Activated naive CD4-positive, alpha-beta T cell treated with anti-CD3 and anti-CD28 coated beads for 36 hours (primary cell): ENCODE measurements at regions of chr15 and their contacts with region 1.

Region 1: GRCh38 chr15:69058830-69059556 is 44.5 kb downstream of the NOX5 start:
- DNase-seq: peak; percentile 86
- H3K4me3 Mint-ChIP-seq: no peak overlapping the region
- H3K27ac Mint-ChIP-seq: no peak overlapping the region
- H3K4me1 Mint-ChIP-seq: peaks cover 22% of the 10 kb centered on the region
- H3K27me3 Mint-ChIP-seq: peaks cover 4% of the 10 kb centered on the region

Region 2: GRCh38 chr15:68763063-68763462 is 295.9 kb before region 1 on chr15:
- CTCF ChIA-PET with region 1: no interaction called
- intact Hi-C with region 1: no loop called
- DNase-seq: no peak
- H3K4me3 Mint-ChIP-seq: no peak overlapping the region
- H3K27ac Mint-ChIP-seq: no peak overlapping the region
- H3K4me1 Mint-ChIP-seq: no peaks in the 10 kb centered on the region
- H3K27me3 Mint-ChIP-seq: peaks cover 6% of the 10 kb centered on the region

Region 3: DNA sequence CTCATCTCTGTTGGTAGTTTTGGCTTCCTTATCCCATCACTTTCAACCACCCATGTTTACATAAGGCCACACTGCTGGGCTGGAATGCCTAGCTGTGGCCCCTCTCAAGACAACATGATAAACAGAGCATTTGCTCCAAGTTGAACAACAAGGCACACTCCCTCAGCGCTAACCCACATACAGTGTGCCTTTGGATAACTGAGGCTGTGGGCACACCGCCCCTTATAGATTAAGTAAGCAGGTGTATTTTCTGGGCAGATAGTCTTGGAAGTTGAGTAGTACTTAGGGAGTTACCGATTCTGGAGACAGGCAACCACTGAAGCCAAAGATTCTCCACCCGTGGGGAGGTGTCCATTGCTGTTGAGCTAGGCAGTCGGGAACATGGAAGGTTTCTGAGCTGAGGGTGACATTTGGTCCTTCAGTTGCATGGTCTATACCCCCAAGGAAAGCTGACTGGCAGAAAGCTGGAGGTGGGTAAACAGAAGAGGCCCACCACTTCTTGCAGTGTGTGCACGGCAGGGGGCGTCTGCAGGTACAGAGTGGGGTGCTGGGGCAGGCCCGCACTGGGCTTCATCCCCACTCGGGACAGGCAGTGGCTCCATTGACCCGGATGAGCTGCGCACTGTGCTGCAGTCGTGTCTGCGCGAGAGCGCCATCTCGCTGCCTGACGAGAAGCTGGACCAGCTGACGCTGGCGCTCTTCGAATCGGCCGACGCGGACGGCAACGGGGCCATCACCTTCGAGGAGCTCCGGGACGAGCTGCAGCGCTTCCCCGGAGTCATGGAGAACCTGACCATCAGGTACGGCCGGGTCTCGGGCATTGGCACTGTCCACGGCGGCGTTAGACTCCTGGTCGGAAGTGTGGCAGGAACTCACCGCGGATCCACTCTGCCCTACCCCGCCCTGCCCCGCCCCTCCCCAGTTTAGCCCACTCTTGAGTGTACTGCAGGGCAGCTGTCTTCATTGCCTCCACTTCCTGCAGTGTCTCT is 27.7 kb before region 1 on chr15:
- CTCF ChIA-PET with region 1: interaction called, 10 read pairs
- intact Hi-C with region 1: no loop called
- DNase-seq: peak; percentile 58
- H3K4me3 Mint-ChIP-seq: peak overlapping the region; percentile 24
- H3K27ac Mint-ChIP-seq: no peak overlapping the region
- H3K4me1 Mint-ChIP-seq: peaks cover 8% of the 10 kb centered on the region
- H3K27me3 Mint-ChIP-seq: peaks cover 31% of the 10 kb centered on the region

Region 4: GRCh38 chr15:69225355-69226025 is 166.5 kb after region 1 on chr15:
- CTCF ChIA-PET with region 1: interaction called, 3 read pairs
- intact Hi-C with region 1: loop called (anchors 1 kb)
- DNase-seq: no peak
- H3K4me3 Mint-ChIP-seq: no peak overlapping the region
- H3K27ac Mint-ChIP-seq: no peak overlapping the region
- H3K4me1 Mint-ChIP-seq: no peaks in the 10 kb centered on the region
- H3K27me3 Mint-ChIP-seq: no peaks in the 10 kb centered on the region

Region 5: DNA sequence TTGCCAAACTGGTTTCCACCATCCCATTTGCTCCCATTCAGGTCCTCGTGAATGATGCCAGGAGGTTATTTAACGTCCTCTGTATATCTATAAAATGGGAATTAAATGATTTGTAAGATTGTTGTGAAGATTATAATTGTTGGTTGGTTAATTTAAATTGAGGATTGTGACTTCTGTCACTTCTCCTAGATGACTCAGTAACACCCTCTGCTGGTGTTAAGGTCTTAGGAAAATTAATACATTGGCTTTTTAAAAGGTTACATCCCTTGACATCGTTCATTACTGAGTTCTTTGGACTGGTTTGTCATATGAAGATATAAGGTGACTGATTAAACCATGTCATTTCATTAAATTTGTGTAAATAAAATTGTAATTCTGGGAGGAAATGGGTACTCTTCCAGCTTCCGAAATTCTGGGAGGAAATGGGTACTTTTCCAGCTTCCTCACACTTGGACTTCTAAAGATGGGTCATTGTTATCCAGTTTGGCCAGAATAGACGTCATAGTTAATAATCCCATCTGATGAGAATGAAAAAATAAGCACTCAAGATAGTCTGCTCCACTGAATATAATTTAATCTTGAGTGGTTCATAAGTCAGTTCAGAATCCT is 206.5 kb after region 1 on chr15:
- CTCF ChIA-PET with region 1: interaction called, 9 read pairs
- intact Hi-C with region 1: loop called (anchors 1 kb)
- DNase-seq: no peak
- H3K4me3 Mint-ChIP-seq: no peak overlapping the region
- H3K27ac Mint-ChIP-seq: no peak overlapping the region
- H3K4me1 Mint-ChIP-seq: no peaks in the 10 kb centered on the region
- H3K27me3 Mint-ChIP-seq: no peaks in the 10 kb centered on the region

Region 6: GRCh38 chr15:69323966-69324365 is 265.0 kb after region 1 on chr15:
- CTCF ChIA-PET with region 1: no interaction called
- intact Hi-C with region 1: loop called (anchors 1 kb)
- DNase-seq: no peak
- H3K4me3 Mint-ChIP-seq: no peak overlapping the region
- H3K27ac Mint-ChIP-seq: no peak overlapping the region
- H3K4me1 Mint-ChIP-seq: peaks cover 20% of the 10 kb centered on the region
- H3K27me3 Mint-ChIP-seq: peaks cover 12% of the 10 kb centered on the region

Region 7: GRCh38 chr15:69394556-69395282 is 335.7 kb after region 1 on chr15:
- CTCF ChIA-PET with region 1: interaction called, 21 read pairs
- intact Hi-C with region 1: loop called (anchors 1 kb)
- DNase-seq: peak; percentile 88
- H3K4me3 Mint-ChIP-seq: no peak overlapping the region
- H3K27ac Mint-ChIP-seq: no peak overlapping the region
- H3K4me1 Mint-ChIP-seq: peaks cover 4% of the 10 kb centered on the region
- H3K27me3 Mint-ChIP-seq: peaks cover 3% of the 10 kb centered on the region

Region 8: DNA sequence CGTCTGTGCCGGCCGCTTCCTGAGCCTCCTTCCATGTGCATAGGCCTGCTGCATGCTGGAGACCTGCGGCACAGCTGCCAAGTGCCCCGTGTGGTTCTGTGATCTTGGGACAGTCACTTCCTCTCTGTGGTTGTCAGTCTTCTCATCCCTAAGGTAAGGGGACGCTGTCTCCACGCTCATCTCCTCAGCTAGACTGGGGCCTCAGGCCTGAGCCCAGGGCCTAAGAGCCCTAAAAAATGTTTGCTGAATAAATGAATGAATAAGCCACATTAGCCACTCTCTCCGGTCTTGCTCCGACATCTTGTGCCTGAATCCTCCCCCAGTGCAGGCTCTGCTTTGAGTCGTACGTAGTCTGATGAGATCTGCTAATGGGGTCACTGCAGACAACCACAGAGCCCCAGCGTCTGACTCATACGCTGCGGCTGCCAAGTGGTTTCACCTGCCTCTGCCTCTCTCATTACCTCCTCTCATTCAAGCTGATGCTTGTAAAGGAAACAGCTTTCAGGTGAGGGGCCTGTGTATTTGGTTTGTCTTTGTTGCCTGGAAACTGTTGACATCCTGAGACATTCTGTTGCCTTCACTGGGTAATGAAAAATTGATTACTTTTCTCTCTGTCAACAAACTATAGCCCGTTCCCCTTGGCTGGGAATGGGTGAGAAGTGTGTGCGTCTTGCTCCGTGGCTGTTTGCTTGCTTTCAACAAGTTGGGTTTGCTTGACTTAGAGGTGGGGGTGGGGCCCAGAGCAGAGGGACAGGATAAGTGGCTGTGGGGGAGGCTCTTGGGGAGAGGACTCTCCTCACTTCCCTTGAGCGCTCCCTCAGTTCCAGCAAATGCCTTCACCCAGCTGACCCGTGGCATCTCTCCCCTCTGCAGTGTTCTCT is 409.5 kb after region 1 on chr15:
- CTCF ChIA-PET with region 1: interaction called, 3 read pairs
- intact Hi-C with region 1: loop called (anchors 2 kb)
- DNase-seq: peak; percentile 89
- H3K4me3 Mint-ChIP-seq: peak overlapping the region; percentile 25
- H3K27ac Mint-ChIP-seq: peak overlapping the region; percentile 75
- H3K4me1 Mint-ChIP-seq: peaks cover 27% of the 10 kb centered on the region
- H3K27me3 Mint-ChIP-seq: no peaks in the 10 kb centered on the region